ENCODE measurements at regions of chrX and their contacts with region 1.

Region 1: DNA sequence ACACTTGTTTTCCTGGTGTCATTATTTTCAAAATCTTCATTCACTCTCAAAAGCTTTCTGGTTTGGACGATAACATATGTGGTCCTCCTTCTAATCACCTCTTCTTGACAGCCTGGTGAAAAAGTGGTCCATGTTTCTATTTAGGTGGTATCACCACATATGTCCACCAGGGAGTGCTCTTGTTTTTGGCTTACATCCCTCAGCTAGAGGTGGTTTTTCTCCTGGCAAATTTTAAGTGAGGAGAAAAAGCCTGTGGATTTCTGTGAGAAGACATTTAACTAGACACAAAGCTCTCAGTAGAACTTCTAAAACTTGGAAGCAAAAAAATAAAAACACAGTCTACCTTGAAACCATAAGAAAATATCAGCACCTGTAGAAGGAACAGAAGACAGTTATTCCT is 58.0 kb upstream of the FRMPD4 start:
- DNase-seq: peak; percentile 46
- H3K4me3 ChIP-seq: no peak overlapping the region
- H3K27ac ChIP-seq: no peak overlapping the region
- H3K4me1 ChIP-seq: no peaks in the 10 kb centered on the region
- H3K27me3 ChIP-seq: no peaks in the 10 kb centered on the region
- CTCF ChIP-seq: peak; percentile 42 to 72

Region 2: GRCh38 chrX:11533211-11533651 is 547.0 kb before region 1 on chrX:
- CTCF ChIA-PET with region 1: no interaction called
- dilution Hi-C with region 1: no loop called
- in situ Hi-C with region 1: no loop called
- intact Hi-C with region 1: loop called (anchors 5 kb)
- DNase-seq: peak; percentile 64
- H3K4me3 ChIP-seq: no peak overlapping the region
- H3K27ac ChIP-seq: no peak overlapping the region
- H3K4me1 ChIP-seq: no peaks in the 10 kb centered on the region
- H3K27me3 ChIP-seq: peaks cover 3% of the 10 kb centered on the region
- CTCF ChIP-seq: peak; percentile 70 to 89

Region 3: GRCh38 chrX:11944501-11944900 is 135.8 kb before region 1 on chrX:
- CTCF ChIA-PET with region 1: no interaction called
- dilution Hi-C with region 1: no loop called
- in situ Hi-C with region 1: no loop called
- intact Hi-C with region 1: loop called (anchors 5 kb)
- DNase-seq: peak; percentile 67
- H3K4me3 ChIP-seq: no peak overlapping the region
- H3K27ac ChIP-seq: no peak overlapping the region
- H3K4me1 ChIP-seq: peaks cover 6% of the 10 kb centered on the region
- H3K27me3 ChIP-seq: no peaks in the 10 kb centered on the region
- CTCF ChIP-seq: peak; percentile 64 to 68

Region 4: DNA sequence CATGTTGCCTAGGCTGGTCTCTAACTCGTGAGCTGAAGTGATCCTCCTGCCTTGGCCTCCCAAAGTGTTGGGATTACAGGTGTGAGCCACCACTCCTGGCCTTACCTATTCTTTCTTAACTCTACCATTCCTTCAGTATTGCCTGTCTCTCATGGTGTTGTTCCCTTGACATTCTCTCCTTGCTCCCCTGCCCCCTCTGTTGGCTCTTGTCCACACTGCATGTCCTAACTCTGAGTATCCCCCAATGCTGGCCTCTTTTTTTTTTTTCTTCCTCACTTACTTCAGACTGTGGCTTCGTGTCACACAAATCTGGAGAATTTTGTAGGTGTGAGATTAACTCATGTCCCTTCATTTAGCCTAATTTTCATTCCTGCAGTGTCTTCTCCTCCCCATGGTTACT is 35.1 kb after region 1 on chrX:
- CTCF ChIA-PET with region 1: no interaction called
- dilution Hi-C with region 1: no loop called
- in situ Hi-C with region 1: no loop called
- intact Hi-C with region 1: no loop called
- DNase-seq: no peak
- H3K4me3 ChIP-seq: no peak overlapping the region
- H3K27ac ChIP-seq: no peak overlapping the region
- H3K4me1 ChIP-seq: no peaks in the 10 kb centered on the region
- H3K27me3 ChIP-seq: no peaks in the 10 kb centered on the region
- CTCF ChIP-seq: peak; percentile 9

Region 5: DNA sequence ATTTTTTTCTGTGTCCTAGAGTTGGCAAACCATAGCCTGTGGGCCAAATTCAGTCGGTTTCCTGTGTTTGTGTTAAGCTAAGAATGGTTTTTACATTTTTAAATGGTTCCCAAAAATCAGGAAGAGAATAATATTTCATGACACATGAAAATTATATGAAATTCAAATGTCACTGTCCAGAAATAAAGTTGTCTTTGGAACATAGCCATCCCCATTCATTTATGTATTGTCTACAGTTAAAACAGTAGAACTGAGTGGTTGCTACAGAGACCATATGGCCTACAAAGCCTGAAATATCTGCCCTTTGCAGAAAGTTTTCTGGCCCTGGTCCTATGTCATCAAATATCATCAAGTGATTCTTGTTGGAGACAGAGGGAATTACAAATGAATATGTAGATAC is 73.5 kb after region 1 on chrX:
- CTCF ChIA-PET with region 1: no interaction called
- dilution Hi-C with region 1: no loop called
- in situ Hi-C with region 1: no loop called
- intact Hi-C with region 1: no loop called
- DNase-seq: no peak
- H3K4me3 ChIP-seq: no peak overlapping the region
- H3K27ac ChIP-seq: no peak overlapping the region
- H3K4me1 ChIP-seq: peaks cover 6% of the 10 kb centered on the region
- H3K27me3 ChIP-seq: no peaks in the 10 kb centered on the region
- CTCF ChIP-seq: no peak

Region 6: GRCh38 chrX:12383196-12383595 is 302.9 kb after region 1 on chrX:
- CTCF ChIA-PET with region 1: no interaction called
- dilution Hi-C with region 1: no loop called
- in situ Hi-C with region 1: no loop called
- intact Hi-C with region 1: loop called (anchors 1 kb)
- DNase-seq: no peak
- H3K4me3 ChIP-seq: no peak overlapping the region
- H3K27ac ChIP-seq: no peak overlapping the region
- H3K4me1 ChIP-seq: no peaks in the 10 kb centered on the region
- H3K27me3 ChIP-seq: no peaks in the 10 kb centered on the region
- CTCF ChIP-seq: peak; percentile 13 to 51

Region 7: DNA sequence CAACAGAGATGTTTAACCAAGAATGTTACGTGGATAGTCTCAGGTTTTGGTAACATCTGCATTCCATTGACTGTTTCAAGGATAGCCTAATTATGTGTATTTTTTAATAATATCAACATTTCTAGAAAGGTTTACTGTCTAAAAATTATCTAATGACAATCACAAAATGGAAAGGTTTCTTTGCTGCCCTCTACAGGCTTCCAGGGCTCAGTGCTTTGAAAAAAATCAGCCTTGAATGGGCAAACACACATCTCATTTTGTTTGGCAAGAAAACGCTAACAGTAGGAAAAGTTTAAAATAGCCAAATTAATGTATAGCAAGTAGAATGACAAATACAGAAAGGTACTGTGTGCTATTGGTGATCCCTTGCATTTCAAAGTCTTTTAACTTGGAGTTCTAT is 487.6 kb after region 1 on chrX:
- CTCF ChIA-PET with region 1: no interaction called
- dilution Hi-C with region 1: no loop called
- in situ Hi-C with region 1: no loop called
- intact Hi-C with region 1: loop called (anchors 1 kb)
- DNase-seq: no peak
- H3K4me3 ChIP-seq: no peak overlapping the region
- H3K27ac ChIP-seq: no peak overlapping the region
- H3K4me1 ChIP-seq: peaks cover 5% of the 10 kb centered on the region
- H3K27me3 ChIP-seq: no peaks in the 10 kb centered on the region
- CTCF ChIP-seq: peak; percentile 77 to 89

Region 8: GRCh38 chrX:12901486-12901885 is 821.2 kb after region 1 on chrX:
- CTCF ChIA-PET with region 1: no interaction called
- dilution Hi-C with region 1: no loop called
- in situ Hi-C with region 1: no loop called
- intact Hi-C with region 1: loop called (anchors 2 kb)
- DNase-seq: peak; percentile 48
- H3K4me3 ChIP-seq: no peak overlapping the region
- H3K27ac ChIP-seq: no peak overlapping the region
- H3K4me1 ChIP-seq: no peaks in the 10 kb centered on the region
- H3K27me3 ChIP-seq: no peaks in the 10 kb centered on the region
- CTCF ChIP-seq: peak; percentile 79